ENCODE measurements at regions of chr19 and their contacts with region 1.

Region 1: DNA sequence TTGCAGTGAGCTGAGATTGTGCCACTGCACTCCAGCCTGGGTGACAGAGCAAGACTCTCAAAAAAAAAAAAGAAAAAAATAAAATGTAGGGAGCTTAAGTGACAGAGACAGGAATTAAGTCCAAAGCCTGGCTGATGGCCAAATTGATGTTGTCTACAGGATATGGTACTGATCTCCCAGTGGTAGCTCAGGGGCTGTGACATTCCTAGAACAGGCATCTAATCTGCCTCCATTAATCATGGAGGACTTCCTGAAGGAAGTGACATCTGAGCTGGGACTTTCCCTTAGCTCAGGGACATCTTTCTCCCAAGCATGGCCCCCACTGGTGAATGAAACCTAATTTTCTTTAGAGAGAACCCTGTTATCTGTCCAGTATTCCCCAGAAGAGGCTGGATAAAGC is 11.4 kb upstream of the EDDM13 start:
- DNase-seq: no peak

Region 2: GRCh38 chr19:55536951-55537740 is 724.0 kb before region 1 on chr19 and contains the start of gene SBK2:
- intact Hi-C with region 1: loop called in 1 of 2 experiments (anchors 5 kb)
- DNase-seq: no peak
- total RNA-seq, gene SBK2: not detected

Region 3: DNA sequence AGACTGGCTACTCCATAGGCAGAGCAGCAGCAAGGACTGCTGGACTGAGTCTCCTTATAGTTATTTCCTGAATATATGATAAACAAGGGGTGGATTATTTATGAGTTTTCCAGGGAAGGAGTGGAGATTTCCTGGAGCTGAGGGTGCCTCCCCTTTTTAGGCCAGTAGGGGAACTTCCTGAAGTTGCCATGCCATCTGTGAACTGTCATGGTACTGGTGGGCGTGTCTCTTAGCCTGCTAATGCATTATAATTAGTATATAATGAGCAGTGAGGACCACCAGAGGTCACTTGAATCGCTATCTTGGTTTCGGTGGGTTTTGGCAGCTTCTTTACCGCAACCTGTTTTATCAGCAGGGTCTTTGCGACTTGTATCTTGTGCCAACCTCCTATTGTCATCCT is 40.0 kb after region 1 on chr19:
- intact Hi-C with region 1: loop called in 1 of 2 experiments (anchors 1 kb)
- DNase-seq: no peak

Region 4: GRCh38 chr19:56333505-56333904 is 72.4 kb after region 1 on chr19:
- intact Hi-C with region 1: no loop called
- DNase-seq: no peak